Heart left ventricle (tissue), 16 donors: ENCODE measurements at regions of chr1 and their contacts with region 1.

Region 1: GRCh38 chr1:115865704-115866380 is 24.9 kb upstream of the NHLH2 start:
- DNase-seq: no peak
- ATAC-seq: no peak
- H3K4me3 ChIP-seq: no peak overlapping the region
- H3K27ac ChIP-seq: no peak overlapping the region
- H3K4me1 ChIP-seq: no peaks in the 10 kb centered on the region
- H3K27me3 ChIP-seq: peaks cover 0 to 10% (median 0%) of the 10 kb centered on the region in 9 donors
- CTCF ChIP-seq: no peak
- POLR2A ChIP-seq: no peak

Region 2: GRCh38 chr1:115969509-115969908 is 103.7 kb after region 1 on chr1:
- intact Hi-C with region 1: loop called in 1 of 10 experiments (anchors 10 kb)
- DNase-seq: no peak
- ATAC-seq: no peak
- H3K4me3 ChIP-seq: no peak overlapping the region
- H3K27ac ChIP-seq: no peak overlapping the region
- H3K4me1 ChIP-seq: no peaks in the 10 kb centered on the region
- H3K27me3 ChIP-seq: no peaks in the 10 kb centered on the region
- CTCF ChIP-seq: no peak
- POLR2A ChIP-seq: no peak